HAP-1 (cell line): ENCODE measurements at regions of chr2 and their contacts with region 1.

Region 1: GRCh38 chr2:134460583-134460998 is 206.7 kb downstream of the MGAT5 start:
- DNase-seq: peak; percentile 42 to 73
- H3K4me3 ChIP-seq: no peak overlapping the region
- H3K4me1 ChIP-seq: no peaks in the 10 kb centered on the region
- H3K27me3 ChIP-seq: no peaks in the 10 kb centered on the region

Region 2: DNA sequence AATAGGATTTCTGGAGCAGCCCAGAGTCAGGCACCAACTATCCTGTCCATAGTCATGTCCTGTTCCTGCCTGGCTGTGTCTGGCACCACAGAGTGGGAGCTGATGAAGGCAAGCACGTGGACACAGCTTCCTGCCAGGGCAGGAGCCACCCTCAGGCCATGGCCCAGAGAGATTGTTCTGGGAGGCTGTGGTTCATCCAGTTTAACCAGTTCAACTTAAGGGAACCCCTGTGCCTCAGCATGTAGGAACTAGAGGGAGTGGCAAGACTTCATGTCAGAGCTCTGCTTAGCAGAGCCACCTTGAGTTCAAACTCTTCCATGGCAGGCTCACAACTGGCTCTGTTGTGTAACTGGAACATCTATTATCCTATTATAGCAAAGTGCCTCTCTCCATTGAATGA is 819.1 kb before region 1 on chr2:
- in situ Hi-C with region 1: no loop called
- DNase-seq: no peak
- H3K4me3 ChIP-seq: no peak overlapping the region
- H3K4me1 ChIP-seq: no peaks in the 10 kb centered on the region
- H3K27me3 ChIP-seq: peaks cover 5% of the 10 kb centered on the region

Region 3: GRCh38 chr2:133900890-133901289 is 559.7 kb before region 1 on chr2:
- in situ Hi-C with region 1: no loop called
- DNase-seq: no peak
- H3K4me3 ChIP-seq: no peak overlapping the region
- H3K4me1 ChIP-seq: no peaks in the 10 kb centered on the region
- H3K27me3 ChIP-seq: no peaks in the 10 kb centered on the region

Region 4: GRCh38 chr2:134782792-134783191 is 322.2 kb after region 1 on chr2:
- in situ Hi-C with region 1: loop called (anchors 10 kb)
- DNase-seq: peak; percentile 32 to 50
- H3K4me3 ChIP-seq: no peak overlapping the region
- H3K4me1 ChIP-seq: no peaks in the 10 kb centered on the region
- H3K27me3 ChIP-seq: no peaks in the 10 kb centered on the region

Region 5: GRCh38 chr2:134897932-134898331 is 437.3 kb after region 1 on chr2:
- in situ Hi-C with region 1: loop called (anchors 5 kb)
- DNase-seq: peak in 1 of 2 experiments; percentile 11
- H3K4me3 ChIP-seq: no peak overlapping the region
- H3K4me1 ChIP-seq: no peaks in the 10 kb centered on the region
- H3K27me3 ChIP-seq: peaks cover 13% of the 10 kb centered on the region